ENCODE measurements at regions of chr2 and their contacts with region 1.

Region 1: GRCh38 chr2:38653715-38654527 is 12.0 kb upstream of the GALM start:
- DNase-seq: peak; percentile 83
- H3K4me3 Mint-ChIP-seq: peak overlapping the region; percentile 43
- H3K27ac Mint-ChIP-seq: peak overlapping the region; percentile 90
- H3K4me1 Mint-ChIP-seq: peaks cover 37% of the 10 kb centered on the region
- H3K27me3 Mint-ChIP-seq: no peaks in the 10 kb centered on the region

Region 2: GRCh38 chr2:37623971-37624900 is 1029.7 kb before region 1 on chr2:
- CTCF ChIA-PET with region 1: no interaction called
- intact Hi-C with region 1: loop called (anchors 5 kb)
- DNase-seq: peak; percentile 43
- H3K4me3 Mint-ChIP-seq: no peak overlapping the region
- H3K27ac Mint-ChIP-seq: peak overlapping the region; percentile 38
- H3K4me1 Mint-ChIP-seq: peaks cover 67% of the 10 kb centered on the region
- H3K27me3 Mint-ChIP-seq: no peaks in the 10 kb centered on the region

Region 3: DNA sequence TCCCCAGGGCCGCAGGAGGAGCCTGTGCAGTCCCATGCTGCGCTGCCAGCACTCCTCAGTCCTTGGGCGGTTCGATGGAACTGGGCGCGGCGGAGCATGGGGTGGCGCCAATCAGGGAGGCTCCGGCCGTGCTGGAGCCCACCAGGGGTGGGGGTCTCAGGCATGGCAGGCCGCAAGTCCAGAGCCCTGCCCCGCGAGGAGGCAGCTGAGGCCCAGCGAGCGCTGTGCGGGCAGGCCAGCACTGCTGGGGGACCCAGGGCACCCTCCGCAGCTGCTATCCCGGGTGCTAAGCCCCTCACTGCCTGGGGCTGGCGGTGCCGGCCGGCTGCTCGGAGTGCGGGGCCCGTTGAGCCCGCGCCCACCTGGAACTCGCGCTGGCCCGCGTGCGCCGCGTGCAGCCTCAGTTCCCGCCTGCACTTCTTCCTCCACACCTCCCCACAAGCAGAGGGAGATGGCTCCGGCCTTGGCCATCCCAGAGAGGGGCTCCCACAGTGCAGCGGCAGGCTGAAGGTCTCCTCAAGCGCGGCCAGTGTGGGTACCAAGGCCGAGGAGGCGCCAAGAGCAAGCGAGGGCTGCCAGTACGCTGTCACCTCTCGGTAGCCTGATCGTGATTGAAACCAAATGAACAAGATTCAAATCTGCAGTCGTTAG is 10.8 kb before region 1 on chr2:
- CTCF ChIA-PET with region 1: no interaction called
- intact Hi-C with region 1: loop called (anchors 1 kb)
- DNase-seq: no peak
- H3K4me3 Mint-ChIP-seq: no peak overlapping the region
- H3K27ac Mint-ChIP-seq: peak overlapping the region; percentile 39
- H3K4me1 Mint-ChIP-seq: peaks cover 30% of the 10 kb centered on the region
- H3K27me3 Mint-ChIP-seq: no peaks in the 10 kb centered on the region

Region 4: DNA sequence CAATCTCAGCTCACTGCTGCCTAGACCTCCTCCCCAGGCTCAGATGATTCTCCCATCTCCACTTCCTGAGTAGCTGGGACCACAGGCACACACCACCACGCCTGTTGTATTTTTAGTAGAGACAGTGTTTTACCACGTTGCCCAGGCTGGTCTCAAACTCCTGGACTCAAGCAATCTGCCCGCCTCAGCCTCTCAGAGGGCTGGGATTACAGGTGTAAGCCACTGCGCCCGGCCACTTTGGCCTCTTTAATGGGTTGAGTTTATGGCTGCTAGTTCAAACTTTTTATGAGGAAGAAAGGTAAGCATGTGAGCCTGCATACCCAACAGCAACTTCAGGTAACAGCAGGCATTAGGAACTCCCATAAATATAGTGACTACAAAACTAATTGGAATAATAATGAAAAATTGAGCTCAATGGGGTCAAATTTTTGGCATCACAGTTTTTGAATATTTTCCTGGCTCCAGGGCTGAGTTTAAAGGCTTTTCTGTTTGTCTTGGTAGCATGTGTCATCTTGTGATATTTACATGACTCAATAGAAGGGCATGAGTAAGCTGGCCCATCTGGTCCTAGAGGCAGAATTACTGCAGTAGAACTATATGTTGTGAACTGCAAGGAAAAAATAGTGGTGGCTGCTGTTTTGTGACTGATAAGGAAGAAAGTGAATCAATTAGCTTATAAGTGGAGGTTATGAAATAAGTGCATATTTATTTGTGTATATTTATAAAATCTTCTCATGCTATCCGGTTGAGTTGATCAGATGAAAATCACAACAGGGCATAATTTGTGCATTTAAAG is 36.8 kb after region 1 on chr2:
- CTCF ChIA-PET with region 1: interaction called, 3 read pairs
- intact Hi-C with region 1: loop called (anchors 1 kb)
- DNase-seq: peak; percentile 50
- H3K4me3 Mint-ChIP-seq: no peak overlapping the region
- H3K27ac Mint-ChIP-seq: peak overlapping the region; percentile 71
- H3K4me1 Mint-ChIP-seq: peaks cover 57% of the 10 kb centered on the region
- H3K27me3 Mint-ChIP-seq: no peaks in the 10 kb centered on the region

Region 5: GRCh38 chr2:38709567-38710194 is 55.8 kb after region 1 on chr2:
- CTCF ChIA-PET with region 1: interaction called, 7 read pairs
- intact Hi-C with region 1: loop called (anchors 1 kb)
- DNase-seq: peak; percentile 80
- H3K4me3 Mint-ChIP-seq: peak overlapping the region; percentile 49
- H3K27ac Mint-ChIP-seq: peak overlapping the region; percentile 95
- H3K4me1 Mint-ChIP-seq: peaks cover 68% of the 10 kb centered on the region
- H3K27me3 Mint-ChIP-seq: no peaks in the 10 kb centered on the region

Region 6: GRCh38 chr2:38750891-38751595 is 97.1 kb after region 1 on chr2 and contains the start of gene SRSF7:
- CTCF ChIA-PET with region 1: no interaction called
- intact Hi-C with region 1: loop called (anchors 1 kb)
- DNase-seq: peak; percentile 97
- H3K4me3 Mint-ChIP-seq: peak within 1 kb of the TSS; percentile 100
- H3K27ac Mint-ChIP-seq: peak within 1 kb of the TSS; percentile 100
- H3K4me1 Mint-ChIP-seq: peaks cover 52% of the 10 kb centered on the region
- H3K27me3 Mint-ChIP-seq: peaks cover 3% of the 10 kb centered on the region
- total RNA-seq, gene SRSF7: 212 to 217 TPM